Cardiac septum (tissue), 1 donor: ENCODE measurements at regions of chr21 and their contacts with region 1.

Region 1: DNA sequence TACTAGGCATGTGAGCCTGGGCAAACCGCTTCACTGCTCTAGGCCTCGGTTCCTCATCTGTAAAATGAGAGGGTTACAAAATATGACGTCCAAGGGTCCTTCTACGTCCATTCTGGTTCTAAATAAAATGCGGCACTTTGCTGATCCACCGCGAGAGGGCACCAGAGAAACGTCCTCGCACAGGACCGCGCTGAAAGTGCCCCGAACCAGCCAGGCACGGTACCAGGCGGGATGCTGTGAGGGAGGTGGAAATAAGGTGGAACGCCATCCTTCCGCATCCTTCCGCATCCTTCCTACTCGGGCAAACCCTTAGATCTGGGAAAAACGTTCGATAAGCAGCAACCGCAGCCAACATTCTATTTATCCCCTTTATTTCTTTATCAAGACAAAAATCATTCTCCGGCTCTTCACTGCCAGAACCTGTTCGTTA is 60.3 kb upstream of the KRTAP19-8 start:
- DNase-seq: no peak

Region 2: GRCh38 chr21:31180256-31181081 is 81.9 kb after region 1 on chr21:
- intact Hi-C with region 1: loop called (anchors 2 kb)
- DNase-seq: no peak

Region 3: GRCh38 chr21:31509194-31510017 is 410.8 kb after region 1 on chr21:
- intact Hi-C with region 1: no loop called
- DNase-seq: no peak

Region 4: GRCh38 chr21:31604591-31605190 is 506.1 kb after region 1 on chr21:
- intact Hi-C with region 1: loop called (anchors 2 kb)
- DNase-seq: no peak